ENCODE measurements at regions of chrX and their contacts with region 1.

Region 1: DNA sequence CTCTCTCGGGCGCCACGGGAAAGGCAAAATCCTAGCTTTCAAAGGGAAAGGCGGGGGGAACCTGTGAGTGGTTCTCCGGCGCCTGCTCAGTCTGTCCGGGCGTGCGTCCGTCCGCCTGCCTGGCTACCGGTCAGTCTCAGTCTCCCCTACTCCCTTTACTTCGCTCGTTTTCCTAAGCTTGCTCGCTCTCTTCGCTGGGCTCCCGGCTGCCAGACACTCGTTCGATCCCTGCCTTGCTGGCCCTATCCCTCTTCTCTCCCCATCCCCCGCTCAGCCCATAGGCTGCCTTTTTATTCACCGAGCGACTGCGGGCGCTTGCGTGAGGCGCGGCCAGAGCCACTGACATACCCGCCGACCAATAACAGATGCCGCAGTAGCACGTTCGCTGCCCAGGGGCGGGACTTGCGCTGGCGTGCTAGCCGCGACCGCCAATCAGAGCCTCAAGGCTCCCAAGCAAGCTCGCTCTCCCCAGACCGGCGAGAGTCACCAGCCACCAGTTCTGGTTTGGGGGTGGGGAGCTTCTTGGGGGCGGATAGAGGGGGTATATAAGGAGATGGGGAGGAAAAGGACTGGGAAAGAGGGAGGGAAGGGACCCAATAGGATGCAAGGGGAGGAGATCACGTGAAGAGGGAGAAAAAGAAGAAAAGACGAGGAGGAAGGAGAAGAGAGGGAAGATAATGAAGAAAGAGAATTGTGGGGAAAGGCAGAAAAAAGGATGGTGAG is 30.0 kb downstream of the ARHGEF9 start:
- DNase-seq: peak; percentile 95
- ATAC-seq: peak; percentile 98

Region 2: GRCh38 chrX:63657821-63658220 is 97.2 kb before region 1 on chrX:
- intact Hi-C with region 1: loop called (anchors 10 kb)
- DNase-seq: peak; percentile 79
- ATAC-seq: peak; percentile 65

Region 3: GRCh38 chrX:63713526-63713925 is 41.5 kb before region 1 on chrX:
- intact Hi-C with region 1: loop called (anchors 5 kb)
- DNase-seq: no peak
- ATAC-seq: peak; percentile 86

Region 4: GRCh38 chrX:63809173-63809572 is 54.2 kb after region 1 on chrX:
- intact Hi-C with region 1: no loop called
- DNase-seq: no peak
- ATAC-seq: no peak

Region 5: DNA sequence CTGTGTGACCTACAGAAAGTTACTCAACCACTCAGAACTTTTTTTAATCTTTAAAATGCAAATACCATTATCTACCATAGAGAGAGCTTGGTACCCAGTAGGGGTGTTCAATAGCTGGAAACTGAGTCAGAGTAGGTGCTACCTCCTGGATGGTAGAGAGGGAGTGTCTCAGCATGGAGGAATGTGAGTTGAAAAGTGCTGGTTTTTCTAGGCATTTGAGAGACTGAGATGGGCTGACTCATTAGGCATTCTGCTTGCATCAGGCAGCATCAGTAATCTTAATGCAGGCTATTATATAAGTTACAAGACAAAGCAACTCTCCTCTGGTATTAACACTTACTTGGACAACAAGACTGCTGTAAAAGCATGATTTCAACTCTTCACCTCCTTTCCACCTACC is 100.9 kb after region 1 on chrX:
- intact Hi-C with region 1: no loop called
- DNase-seq: no peak
- ATAC-seq: no peak